Naive thymus-derived CD4-positive, alpha-beta T cell (primary cell): ENCODE measurements at regions of chr12 and their contacts with region 1.

Region 1: GRCh38 chr12:3872800-3873636 is at the start of gene PARP11:
- DNase-seq: peak; percentile 93 to 98 (median 96)
- ATAC-seq: peak; percentile 98
- H3K4me3 ChIP-seq: peak within 1 kb of the TSS; percentile 93
- H3K4me3 Mint-ChIP-seq: peak within 1 kb of the TSS; percentile 90 to 99 (median 94)
- H3K27ac ChIP-seq: peak within 1 kb of the TSS; percentile 96
- H3K27ac Mint-ChIP-seq: peak within 1 kb of the TSS; percentile 95 to 99 (median 98)
- H3K4me1 ChIP-seq: peaks cover 23 to 32% of the 10 kb centered on the region in 2 donors
- H3K4me1 Mint-ChIP-seq: peaks cover 31 to 58% (median 55%) of the 10 kb centered on the region in 7 donors
- H3K27me3 ChIP-seq: no peaks in the 10 kb centered on the region
- H3K27me3 Mint-ChIP-seq: peaks cover 0 to 6% (median 0%) of the 10 kb centered on the region in 5 donors
- total RNA-seq, gene PARP11: 21.5 to 37.4 (median 35.1) TPM

Region 2: GRCh38 chr12:3727877-3728632 is 145.0 kb before region 1 on chr12:
- CTCF ChIA-PET with region 1: no interaction called
- POLR2A ChIA-PET with region 1: no interaction called
- intact Hi-C with region 1: loop called in 1 of 2 experiments (anchors 1 kb)
- DNase-seq: peak in 8 of 9 donors; percentile 17 to 61 (median 36)
- ATAC-seq: peak; percentile 84
- H3K4me3 ChIP-seq: no peak overlapping the region
- H3K4me3 Mint-ChIP-seq: peak overlapping the region in 9 of 10 donors; percentile 34 to 87 (median 52)
- H3K27ac ChIP-seq: no peak overlapping the region
- H3K27ac Mint-ChIP-seq: peak overlapping the region; percentile 52 to 97 (median 79)
- H3K4me1 ChIP-seq: peaks cover 8 to 25% of the 10 kb centered on the region in 2 donors
- H3K4me1 Mint-ChIP-seq: peaks cover 27 to 47% (median 40%) of the 10 kb centered on the region in 7 donors
- H3K27me3 ChIP-seq: no peaks in the 10 kb centered on the region
- H3K27me3 Mint-ChIP-seq: no peaks in the 10 kb centered on the region

Region 3: GRCh38 chr12:4148418-4149056 is 275.5 kb after region 1 on chr12:
- CTCF ChIA-PET with region 1: no interaction called
- POLR2A ChIA-PET with region 1: no interaction called
- intact Hi-C with region 1: loop called (anchors 2 kb)
- DNase-seq: peak in 1 of 9 donors; percentile 37
- ATAC-seq: peak; percentile 80
- H3K4me3 ChIP-seq: no peak overlapping the region
- H3K4me3 Mint-ChIP-seq: no peak overlapping the region
- H3K27ac ChIP-seq: no peak overlapping the region
- H3K27ac Mint-ChIP-seq: peak overlapping the region in 5 of 9 donors; percentile 14 to 70 (median 61)
- H3K4me1 ChIP-seq: peaks cover 13 to 41% of the 10 kb centered on the region in 2 donors
- H3K4me1 Mint-ChIP-seq: peaks cover 20 to 93% (median 34%) of the 10 kb centered on the region in 7 donors
- H3K27me3 ChIP-seq: no peaks in the 10 kb centered on the region
- H3K27me3 Mint-ChIP-seq: no peaks in the 10 kb centered on the region

Region 4: DNA sequence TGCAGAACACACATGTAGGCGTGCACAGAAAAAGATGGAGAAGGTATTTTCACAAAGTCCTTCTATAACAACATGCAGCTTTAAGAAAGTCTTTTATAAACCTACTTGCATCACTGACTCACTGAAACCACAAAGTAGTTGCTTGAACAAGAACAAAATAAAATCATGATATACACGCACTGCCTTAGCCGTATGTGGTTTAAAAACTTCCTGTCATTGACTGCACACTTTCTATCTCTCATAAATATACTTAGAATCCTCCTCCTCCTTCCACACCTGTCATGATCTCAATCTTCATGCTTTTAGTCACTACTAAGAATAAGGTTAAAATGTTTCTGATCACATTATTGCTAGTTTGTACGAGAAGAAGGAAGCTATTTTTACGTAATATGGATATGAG is 633.9 kb after region 1 on chr12:
- CTCF ChIA-PET with region 1: no interaction called
- POLR2A ChIA-PET with region 1: no interaction called
- intact Hi-C with region 1: loop called in 1 of 2 experiments (anchors 2 kb)
- DNase-seq: peak in 7 of 9 donors; percentile 61 to 90 (median 84)
- ATAC-seq: peak; percentile 97
- H3K4me3 ChIP-seq: no peak overlapping the region
- H3K4me3 Mint-ChIP-seq: peak overlapping the region; percentile 12 to 75 (median 70)
- H3K27ac ChIP-seq: peak overlapping the region; percentile 62
- H3K27ac Mint-ChIP-seq: peak overlapping the region; percentile 78 to 95 (median 89)
- H3K4me1 ChIP-seq: peaks cover 13% of the 10 kb centered on the region in 2 donors
- H3K4me1 Mint-ChIP-seq: peaks cover 12 to 37% (median 28%) of the 10 kb centered on the region in 7 donors
- H3K27me3 ChIP-seq: no peaks in the 10 kb centered on the region
- H3K27me3 Mint-ChIP-seq: no peaks in the 10 kb centered on the region

Region 5: GRCh38 chr12:4829161-4829792 is 956.3 kb after region 1 on chr12:
- CTCF ChIA-PET with region 1: no interaction called
- POLR2A ChIA-PET with region 1: no interaction called
- intact Hi-C with region 1: loop called in 1 of 2 experiments (anchors 5 kb)
- DNase-seq: peak in 7 of 9 donors; percentile 8 to 59 (median 47)
- ATAC-seq: peak; percentile 86
- H3K4me3 ChIP-seq: peak overlapping the region; percentile 39
- H3K4me3 Mint-ChIP-seq: peak overlapping the region; percentile 16 to 89 (median 69)
- H3K27ac ChIP-seq: no peak overlapping the region
- H3K27ac Mint-ChIP-seq: peak overlapping the region; percentile 20 to 99 (median 70)
- H3K4me1 ChIP-seq: peaks cover 37 to 53% of the 10 kb centered on the region in 2 donors
- H3K4me1 Mint-ChIP-seq: peaks cover 44 to 74% (median 65%) of the 10 kb centered on the region in 7 donors
- H3K27me3 ChIP-seq: no peaks in the 10 kb centered on the region
- H3K27me3 Mint-ChIP-seq: no peaks in the 10 kb centered on the region